ENCODE measurements at regions of chr14 and their contacts with region 1.

Region 1: DNA sequence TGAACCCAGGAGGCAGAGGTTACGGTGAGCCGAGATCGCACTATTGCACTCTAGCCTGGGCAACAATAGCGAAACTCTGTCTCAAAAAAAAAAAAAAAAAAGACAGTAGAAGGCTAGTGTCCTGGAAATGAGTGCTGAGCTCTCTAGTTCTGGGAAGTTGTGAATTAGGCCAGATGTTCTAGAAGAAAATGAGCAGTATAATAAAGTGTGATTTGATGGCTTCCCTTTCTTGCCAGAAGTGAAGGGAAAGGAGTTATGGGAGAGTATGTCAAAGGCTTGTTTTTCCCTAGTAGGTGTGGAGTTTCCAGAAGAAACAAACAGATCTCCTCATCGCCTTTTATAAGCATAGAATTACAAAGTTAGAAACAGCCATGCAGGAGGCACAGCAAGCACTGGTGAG is 20.5 kb downstream of the RNF212B start:
- DNase-seq: no peak
- H3K4me3 ChIP-seq: no peak overlapping the region
- H3K27ac ChIP-seq: no peak overlapping the region
- H3K4me1 ChIP-seq: no peaks in the 10 kb centered on the region
- H3K27me3 ChIP-seq: no peaks in the 10 kb centered on the region
- CTCF ChIP-seq: no peak
- POLR2A ChIP-seq: no peak

Region 2: GRCh38 chr14:23339506-23340268 is 81.4 kb after region 1 on chr14:
- intact Hi-C with region 1: loop called (anchors 2 kb)
- DNase-seq: no peak
- H3K4me3 ChIP-seq: no peak overlapping the region
- H3K27ac ChIP-seq: no peak overlapping the region
- H3K4me1 ChIP-seq: no peaks in the 10 kb centered on the region
- H3K27me3 ChIP-seq: no peaks in the 10 kb centered on the region
- CTCF ChIP-seq: no peak
- POLR2A ChIP-seq: no peak

Region 3: GRCh38 chr14:23379366-23380196 is 121.3 kb after region 1 on chr14:
- intact Hi-C with region 1: no loop called
- DNase-seq: peak; percentile 62 to 77
- H3K4me3 ChIP-seq: no peak overlapping the region
- H3K27ac ChIP-seq: no peak overlapping the region
- H3K4me1 ChIP-seq: peaks cover 0 to 5% of the 10 kb centered on the region in 2 donors
- H3K27me3 ChIP-seq: no peaks in the 10 kb centered on the region
- CTCF ChIP-seq: peak; percentile 63 to 96 (median 86)
- POLR2A ChIP-seq: no peak

Measured in breast epithelium (tissue), 4 donors.